ENCODE measurements at regions of chr15 and their contacts with region 1.

Region 1: DNA sequence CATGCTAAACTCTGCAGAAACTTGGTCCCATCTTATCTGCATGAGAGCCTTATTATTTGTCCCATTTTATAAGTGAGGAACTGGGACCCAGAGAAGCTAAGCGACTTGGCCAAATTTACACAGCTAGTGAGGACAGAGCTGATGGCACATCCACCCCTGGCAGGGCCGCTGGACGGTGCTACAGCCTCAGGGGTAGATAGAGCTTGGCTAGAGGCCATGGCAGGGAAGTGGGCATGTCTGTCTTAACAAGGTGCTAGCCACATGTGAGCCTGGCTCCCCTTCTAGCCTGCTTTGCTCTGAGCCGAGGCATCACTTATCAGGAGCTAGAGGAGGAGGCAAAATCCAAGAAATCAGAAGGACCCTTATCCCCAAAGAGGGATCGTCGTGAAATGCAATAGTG is 36.7 kb upstream of the SYNM start:
- DNase-seq: no peak
- H3K4me3 ChIP-seq: no peak overlapping the region
- H3K27ac ChIP-seq: no peak overlapping the region
- H3K4me1 ChIP-seq: no peaks in the 10 kb centered on the region
- H3K27me3 ChIP-seq: no peaks in the 10 kb centered on the region
- CTCF ChIP-seq: no peak
- POLR2A ChIP-seq: no peak

Region 2: GRCh38 chr15:98779463-98780071 is 288.6 kb before region 1 on chr15:
- intact Hi-C with region 1: loop called (anchors 10 kb)
- DNase-seq: peak; percentile 80 to 90
- H3K4me3 ChIP-seq: no peak overlapping the region
- H3K27ac ChIP-seq: peak overlapping the region; percentile 90 to 92 (median 91)
- H3K4me1 ChIP-seq: peaks cover 36 to 51% of the 10 kb centered on the region in 2 donors
- H3K27me3 ChIP-seq: no peaks in the 10 kb centered on the region
- CTCF ChIP-seq: peak; percentile 56 to 93 (median 88)
- POLR2A ChIP-seq: no peak

Measured in thyroid gland (tissue), 4 donors.